Heart right ventricle (tissue), 16 donors: ENCODE measurements at regions of chr16 and their contacts with region 1.

Region 1: GRCh38 chr16:58336332-58337089 is 41.7 kb upstream of the PRSS54 start:
- DNase-seq: peak; percentile 85 to 87
- ATAC-seq: peak; percentile 60 to 84 (median 76)
- H3K4me3 ChIP-seq: peak overlapping the region in 8 of 10 donors; percentile 14 to 50 (median 32)
- H3K27ac ChIP-seq: peak overlapping the region in 8 of 10 donors; percentile 10 to 82 (median 70)
- H3K4me1 ChIP-seq: peaks cover 5 to 44% (median 29%) of the 10 kb centered on the region in 9 donors
- H3K27me3 ChIP-seq: no peaks in the 10 kb centered on the region
- CTCF ChIP-seq: peak; percentile 89 to 96 (median 94)

Region 2: GRCh38 chr16:58464916-58465731 is 128.6 kb after region 1 on chr16:
- intact Hi-C with region 1: loop called in 2 of 10 experiments (anchors 5 kb)
- DNase-seq: peak in 1 of 2 donors; percentile 59
- ATAC-seq: peak; percentile 28 to 66 (median 47)
- H3K4me3 ChIP-seq: peak overlapping the region; percentile 61 to 96 (median 84)
- H3K27ac ChIP-seq: peak overlapping the region; percentile 68 to 98 (median 94)
- H3K4me1 ChIP-seq: peaks cover 0 to 73% (median 41%) of the 10 kb centered on the region in 9 donors
- H3K27me3 ChIP-seq: peaks cover 0 to 76% (median 13%) of the 10 kb centered on the region in 7 donors
- CTCF ChIP-seq: peak in 7 of 9 donors; percentile 14 to 50 (median 35)

Region 3: DNA sequence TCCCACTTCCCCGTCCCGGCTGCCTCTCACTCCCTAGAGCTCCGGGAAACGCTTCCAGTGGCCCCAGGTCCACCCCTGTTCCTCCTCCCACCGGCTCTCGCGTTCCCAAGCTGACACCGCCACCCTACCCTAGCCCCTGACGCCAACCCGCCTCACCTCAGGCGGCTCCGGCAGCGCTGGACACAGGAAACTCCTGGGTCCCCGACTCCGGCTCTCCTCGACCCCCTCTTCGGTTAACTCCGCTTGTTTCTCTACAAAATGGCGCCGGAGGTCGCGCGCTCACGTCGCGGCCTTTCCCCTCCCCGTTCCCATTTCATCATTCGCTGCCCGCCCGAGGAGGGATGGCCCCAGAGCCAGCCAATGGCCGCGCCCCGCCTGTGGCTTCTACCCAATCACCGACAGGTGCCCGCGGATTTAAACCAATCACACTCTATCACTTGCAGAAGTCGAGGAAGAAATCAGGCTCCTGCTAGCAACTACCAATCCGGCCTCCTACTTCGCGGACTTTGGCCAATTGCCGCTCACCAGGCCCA is 293.1 kb after region 1 on chr16 and contains the start of gene CNOT1:
- intact Hi-C with region 1: loop called in 3 of 10 experiments (anchors 10 kb)
- DNase-seq: peak; percentile 97 to 98
- ATAC-seq: peak; percentile 94 to 96 (median 96)
- H3K4me3 ChIP-seq: peak within 1 kb of the TSS; percentile 82 to 99 (median 94)
- H3K27ac ChIP-seq: peak within 1 kb of the TSS; percentile 93 to 99 (median 98)
- H3K4me1 ChIP-seq: peaks cover 6 to 45% (median 34%) of the 10 kb centered on the region in 9 donors
- H3K27me3 ChIP-seq: no peaks in the 10 kb centered on the region
- CTCF ChIP-seq: no peak
- total RNA-seq, gene CNOT1: 66.9 to 102 (median 88.1) TPM

Region 4: DNA sequence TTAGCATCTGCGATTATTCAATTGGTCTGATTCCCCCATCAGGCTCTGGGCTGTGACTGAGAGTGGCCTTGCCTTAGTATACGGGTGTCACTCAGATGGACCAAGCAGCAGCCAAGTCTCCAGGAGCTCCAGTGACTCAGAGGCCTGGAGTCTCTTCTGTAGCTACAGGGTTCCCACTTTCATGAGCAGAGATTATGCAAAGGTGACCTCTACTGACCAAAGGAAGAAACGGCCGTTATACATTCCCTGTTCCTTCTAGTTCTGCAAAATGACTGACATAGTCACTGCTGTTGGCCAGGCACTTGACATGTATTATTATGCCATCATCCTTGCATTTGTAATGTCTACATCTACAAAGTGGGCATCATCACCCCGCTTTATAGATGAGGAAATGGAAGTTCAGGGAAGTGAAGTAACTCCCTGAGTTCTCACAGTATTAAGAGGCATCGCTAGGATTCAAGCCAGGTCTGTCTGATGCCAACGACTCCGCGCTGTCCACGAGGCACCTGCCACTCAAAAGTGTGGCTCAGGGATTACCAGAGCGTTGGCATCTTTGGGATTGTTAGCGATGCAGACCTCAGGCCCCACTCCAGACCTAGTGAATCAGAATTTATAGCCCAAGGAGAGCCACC is 324.8 kb after region 1 on chr16:
- intact Hi-C with region 1: loop called in 3 of 10 experiments (anchors 10 kb)
- DNase-seq: peak in 1 of 2 donors; percentile 49
- ATAC-seq: peak; percentile 77 to 96 (median 86)
- H3K4me3 ChIP-seq: no peak overlapping the region
- H3K27ac ChIP-seq: no peak overlapping the region
- H3K4me1 ChIP-seq: peaks cover 0 to 8% (median 0%) of the 10 kb centered on the region in 9 donors
- H3K27me3 ChIP-seq: no peaks in the 10 kb centered on the region
- CTCF ChIP-seq: peak; percentile 13 to 73 (median 58)

Region 5: GRCh38 chr16:58755989-58756649 is 419.6 kb after region 1 on chr16:
- intact Hi-C with region 1: loop called in 2 of 10 experiments (anchors 10 kb)
- DNase-seq: peak; percentile 62 to 67
- ATAC-seq: peak; percentile 88 to 95 (median 92)
- H3K4me3 ChIP-seq: no peak overlapping the region
- H3K27ac ChIP-seq: no peak overlapping the region
- H3K4me1 ChIP-seq: peaks cover 0 to 10% (median 0%) of the 10 kb centered on the region in 9 donors
- H3K27me3 ChIP-seq: no peaks in the 10 kb centered on the region
- CTCF ChIP-seq: peak; percentile 38 to 82 (median 71)